ENCODE measurements at regions of chr17 and their contacts with region 1.

Region 1: GRCh38 chr17:75749545-75750389 is 15.2 kb downstream of the GALK1 start:
- DNase-seq: peak; percentile 94
- H3K4me3 ChIP-seq: peak overlapping the region in 1 of 2 experiments; percentile 30; a peak in 2 of 4 replicates
- H3K27ac ChIP-seq: no peak overlapping the region
- H3K4me1 ChIP-seq: peaks cover 0 to 23% of the 10 kb centered on the region in 2 experiments; a peak in 1 of 4 replicates
- H3K27me3 ChIP-seq: no peaks in the 10 kb centered on the region
- CTCF ChIP-seq: peak; percentile 99
- EP300 ChIP-seq: no peak
- RAD21 ChIP-seq: peak; percentile 82

Region 2: DNA sequence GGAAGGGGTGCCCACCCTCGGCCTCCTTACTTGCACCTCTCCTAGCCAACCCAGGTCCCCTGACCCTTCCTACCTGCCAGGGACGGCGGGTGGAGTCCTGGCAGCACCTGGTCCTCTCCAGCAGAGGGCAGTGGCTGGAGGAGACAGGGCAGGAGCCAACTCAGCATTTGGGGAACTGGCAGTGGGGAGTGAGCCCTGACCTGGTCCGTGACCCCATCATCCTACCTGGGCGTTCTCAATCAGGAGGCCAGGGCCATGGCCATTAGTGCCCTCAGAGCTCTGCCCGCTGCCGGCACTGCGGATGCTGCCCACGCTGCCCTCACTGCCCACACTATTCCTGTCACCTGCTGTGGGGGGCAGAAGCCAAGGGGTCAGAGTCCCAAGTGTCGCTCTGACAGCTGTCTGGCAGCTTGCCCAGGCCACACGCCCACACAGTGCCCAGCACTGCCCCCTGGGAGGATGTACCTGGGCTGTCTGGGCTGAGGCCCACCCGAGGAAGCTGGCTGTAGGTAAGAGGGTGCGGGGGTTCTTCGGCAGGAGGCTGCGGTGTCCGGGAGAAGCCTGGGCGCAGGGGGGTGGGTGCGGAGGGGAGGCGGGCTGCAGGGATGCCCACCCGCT is 245.3 kb before region 1 on chr17:
- CTCF ChIA-PET with region 1: interaction called, 11 read pairs
- POLR2A ChIA-PET with region 1: no interaction called
- DNase-seq: peak; percentile 86
- H3K4me3 ChIP-seq: no peak overlapping the region
- H3K27ac ChIP-seq: no peak overlapping the region
- H3K4me1 ChIP-seq: peaks cover 5 to 6% of the 10 kb centered on the region in 2 experiments; a peak in 1 of 4 replicates
- H3K27me3 ChIP-seq: no peaks in the 10 kb centered on the region
- CTCF ChIP-seq: peak; percentile 67
- EP300 ChIP-seq: no peak
- RAD21 ChIP-seq: peak; percentile 49

Region 3: GRCh38 chr17:75614006-75614405 is 135.8 kb before region 1 on chr17:
- CTCF ChIA-PET with region 1: interaction called, 1,370 read pairs
- POLR2A ChIA-PET with region 1: no interaction called
- DNase-seq: peak; percentile 78
- H3K4me3 ChIP-seq: no peak overlapping the region
- H3K27ac ChIP-seq: no peak overlapping the region
- H3K4me1 ChIP-seq: no peaks in the 10 kb centered on the region
- H3K27me3 ChIP-seq: no peaks in the 10 kb centered on the region
- CTCF ChIP-seq: peak; percentile 20; the same call in 1 of the 2 replicates
- EP300 ChIP-seq: no peak
- RAD21 ChIP-seq: no peak

Region 4: GRCh38 chr17:75673487-75673886 is 76.3 kb before region 1 on chr17:
- CTCF ChIA-PET with region 1: interaction called, 297 read pairs
- POLR2A ChIA-PET with region 1: interaction called, 4 read pairs
- DNase-seq: no peak
- H3K4me3 ChIP-seq: no peak overlapping the region
- H3K27ac ChIP-seq: no peak overlapping the region
- H3K4me1 ChIP-seq: peaks cover under 1% of the 10 kb centered on the region in 2 experiments; a peak in 3 of 4 replicates
- H3K27me3 ChIP-seq: no peaks in the 10 kb centered on the region
- CTCF ChIP-seq: no peak
- EP300 ChIP-seq: no peak
- RAD21 ChIP-seq: no peak

Region 5: DNA sequence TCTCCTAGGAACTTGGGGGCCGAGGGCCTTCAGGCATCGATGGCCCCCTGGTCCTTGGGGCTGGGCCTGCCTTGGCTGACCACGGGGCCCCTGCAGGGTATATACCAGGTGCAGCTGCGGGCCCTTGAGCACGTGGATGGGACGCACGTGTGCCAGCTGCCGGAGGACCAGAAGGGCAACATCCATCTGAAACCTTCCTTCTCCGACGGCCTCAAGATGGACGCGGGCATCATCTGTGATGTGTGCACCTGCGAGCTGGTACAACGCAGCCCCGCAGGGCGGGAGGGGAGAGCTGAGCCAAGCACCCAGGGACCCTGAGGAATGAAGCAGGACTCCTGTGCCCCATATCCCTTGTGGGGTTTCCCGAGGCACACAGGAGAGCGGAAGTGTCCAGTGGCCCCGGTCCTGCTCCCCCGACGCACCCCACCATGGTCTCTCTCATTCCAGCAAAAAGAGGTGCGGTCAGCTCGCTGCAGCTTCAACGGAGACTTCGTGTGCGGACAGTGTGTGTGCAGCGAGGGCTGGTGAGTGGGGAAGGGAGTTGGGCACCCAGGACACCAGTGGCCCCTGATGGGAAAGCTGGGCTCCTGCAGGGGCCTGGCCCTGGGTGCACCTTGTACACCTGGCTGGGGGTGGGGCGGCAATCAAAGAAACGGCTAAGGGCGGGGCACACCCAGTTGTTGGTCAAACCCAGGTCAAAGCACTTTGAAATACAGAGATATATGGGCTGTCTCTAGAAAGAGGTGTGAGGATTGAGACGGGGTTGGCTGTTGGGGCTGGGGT is 17.9 kb before region 1 on chr17:
- CTCF ChIA-PET with region 1: interaction called, 419 read pairs
- POLR2A ChIA-PET with region 1: interaction called, 3 read pairs
- DNase-seq: no peak
- H3K4me3 ChIP-seq: no peak overlapping the region
- H3K27ac ChIP-seq: no peak overlapping the region
- H3K4me1 ChIP-seq: no peaks in the 10 kb centered on the region
- H3K27me3 ChIP-seq: no peaks in the 10 kb centered on the region
- CTCF ChIP-seq: no peak
- EP300 ChIP-seq: no peak
- RAD21 ChIP-seq: no peak

Region 6: GRCh38 chr17:75784473-75785015 is 34.8 kb after region 1 on chr17 and contains the start of gene UNK:
- CTCF ChIA-PET with region 1: interaction called, 41 read pairs
- POLR2A ChIA-PET with region 1: interaction called, 12 read pairs
- DNase-seq: peak; percentile 99
- H3K4me3 ChIP-seq: peak within 1 kb of the TSS; percentile 65 to 72
- H3K27ac ChIP-seq: peak within 1 kb of the TSS; percentile 98
- H3K4me1 ChIP-seq: peaks cover 16 to 20% of the 10 kb centered on the region in 2 experiments
- H3K27me3 ChIP-seq: no peaks in the 10 kb centered on the region
- CTCF ChIP-seq: no peak
- EP300 ChIP-seq: no peak
- RAD21 ChIP-seq: no peak
- polyA plus RNA-seq, gene UNK: 19.9 and 24.8 TPM in 2 replicates

Region 7: GRCh38 chr17:75827252-75828115 is 77.7 kb after region 1 on chr17:
- CTCF ChIA-PET with region 1: interaction called, 63 read pairs
- POLR2A ChIA-PET with region 1: interaction called, 7 read pairs
- DNase-seq: peak; percentile 99
- H3K4me3 ChIP-seq: peak overlapping the region; percentile 18 to 37; a peak in 3 of 4 replicates
- H3K27ac ChIP-seq: peak overlapping the region; percentile 10 to 98; a peak in 3 of 4 replicates
- H3K4me1 ChIP-seq: peaks cover 5 to 33% of the 10 kb centered on the region in 2 experiments; a peak in 2 of 4 replicates
- H3K27me3 ChIP-seq: no peaks in the 10 kb centered on the region
- CTCF ChIP-seq: peak; percentile 81
- EP300 ChIP-seq: peak in 1 of 2 experiments; percentile 59; a peak in 3 of 4 replicates
- RAD21 ChIP-seq: peak; percentile 73